Right cardiac atrium (tissue), 5 donors: ENCODE measurements at regions of chr5 and their contacts with region 1.

Region 1: DNA sequence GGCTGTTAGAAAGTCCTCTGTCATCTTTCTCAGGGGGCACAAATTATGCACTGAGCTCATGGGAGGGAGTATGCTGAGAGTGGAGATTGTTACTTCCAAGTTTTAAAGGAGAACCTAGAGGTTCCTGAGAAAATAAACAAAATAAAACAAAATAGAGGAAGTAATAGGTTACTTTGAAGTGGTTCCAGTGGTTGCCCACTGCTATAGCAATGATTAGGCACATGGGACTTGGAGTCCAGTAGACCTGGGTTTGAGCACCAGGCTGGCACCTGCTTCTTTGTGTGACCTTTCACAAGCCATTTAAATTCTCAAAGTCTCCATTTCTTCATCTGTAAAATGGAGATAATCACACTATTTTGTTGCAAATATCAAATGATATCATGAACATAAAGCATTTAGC is 13.8 kb upstream of the CDC23 start:
- DNase-seq: no peak
- ATAC-seq: no peak
- H3K4me3 ChIP-seq: no peak overlapping the region
- H3K27ac ChIP-seq: no peak overlapping the region
- H3K4me1 ChIP-seq: peaks cover 3% of the 10 kb centered on the region
- H3K27me3 ChIP-seq: no peaks in the 10 kb centered on the region

Region 2: GRCh38 chr5:138109463-138110265 is 117.2 kb before region 1 on chr5:
- intact Hi-C with region 1: no loop called
- DNase-seq: no peak
- ATAC-seq: no peak
- H3K4me3 ChIP-seq: no peak overlapping the region
- H3K27ac ChIP-seq: no peak overlapping the region
- H3K4me1 ChIP-seq: no peaks in the 10 kb centered on the region
- H3K27me3 ChIP-seq: no peaks in the 10 kb centered on the region

Region 3: GRCh38 chr5:138159666-138160065 is 67.2 kb before region 1 on chr5:
- intact Hi-C with region 1: no loop called
- DNase-seq: no peak
- ATAC-seq: no peak
- H3K4me3 ChIP-seq: no peak overlapping the region
- H3K27ac ChIP-seq: no peak overlapping the region
- H3K4me1 ChIP-seq: no peaks in the 10 kb centered on the region
- H3K27me3 ChIP-seq: no peaks in the 10 kb centered on the region

Region 4: GRCh38 chr5:138274189-138274853 is 47.4 kb after region 1 on chr5 and contains the start of gene GFRA3:
- intact Hi-C with region 1: loop called in 1 of 4 experiments (anchors 10 kb)
- DNase-seq: peak in 2 of 3 donors; percentile 49 to 50
- ATAC-seq: peak; percentile 33 to 63
- H3K4me3 ChIP-seq: peak within 1 kb of the TSS; percentile 55
- H3K27ac ChIP-seq: no peak within 1 kb of the TSS
- H3K4me1 ChIP-seq: peaks cover 2% of the 10 kb centered on the region
- H3K27me3 ChIP-seq: no peaks in the 10 kb centered on the region
- total RNA-seq, gene GFRA3: 1.0 to 1.9 (median 1.5) TPM

Region 5: DNA sequence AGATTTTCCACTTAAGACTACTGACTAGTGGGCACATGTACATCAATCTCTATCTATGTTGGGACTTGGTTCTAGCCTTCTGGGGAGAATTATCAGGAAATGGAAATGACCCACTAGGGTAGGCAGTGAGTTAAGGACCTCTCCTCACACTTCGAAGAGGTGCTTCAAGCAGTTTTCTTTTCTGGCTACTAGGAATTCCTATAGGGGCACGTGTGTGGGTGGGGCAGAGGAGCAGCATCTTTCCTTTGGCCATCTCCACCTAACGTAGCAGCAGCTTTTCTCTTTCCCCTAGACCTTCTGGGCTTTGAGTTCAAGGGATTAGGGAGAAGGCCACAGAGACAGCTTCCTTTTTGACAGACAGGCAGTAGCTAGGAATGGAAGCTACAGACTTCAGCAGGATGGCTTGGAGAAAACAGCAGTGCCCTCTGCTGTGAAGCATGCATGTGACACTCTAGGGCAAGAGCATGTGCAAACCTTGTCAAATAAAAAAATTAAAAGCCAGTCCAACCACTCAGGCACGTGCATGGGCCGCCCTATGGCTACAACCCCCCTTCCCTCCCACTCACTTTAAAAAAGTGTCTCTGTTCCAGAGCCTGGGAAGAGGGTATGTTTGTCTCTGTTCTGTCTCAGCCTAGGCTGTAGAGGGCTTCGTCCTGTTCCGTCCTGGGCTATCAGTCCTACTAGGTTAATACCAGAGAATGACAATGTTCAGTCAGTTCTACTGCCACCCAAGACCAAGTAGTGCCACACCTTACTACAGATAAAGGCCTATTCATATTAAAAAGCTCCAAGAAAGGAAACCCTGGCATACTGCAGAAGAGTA is 56.2 kb after region 1 on chr5:
- intact Hi-C with region 1: loop called (anchors 5 to 10 kb)
- DNase-seq: peak; percentile 38 to 59 (median 59)
- ATAC-seq: peak; percentile 86 to 88
- H3K4me3 ChIP-seq: no peak overlapping the region
- H3K27ac ChIP-seq: no peak overlapping the region
- H3K4me1 ChIP-seq: no peaks in the 10 kb centered on the region
- H3K27me3 ChIP-seq: no peaks in the 10 kb centered on the region

Region 6: DNA sequence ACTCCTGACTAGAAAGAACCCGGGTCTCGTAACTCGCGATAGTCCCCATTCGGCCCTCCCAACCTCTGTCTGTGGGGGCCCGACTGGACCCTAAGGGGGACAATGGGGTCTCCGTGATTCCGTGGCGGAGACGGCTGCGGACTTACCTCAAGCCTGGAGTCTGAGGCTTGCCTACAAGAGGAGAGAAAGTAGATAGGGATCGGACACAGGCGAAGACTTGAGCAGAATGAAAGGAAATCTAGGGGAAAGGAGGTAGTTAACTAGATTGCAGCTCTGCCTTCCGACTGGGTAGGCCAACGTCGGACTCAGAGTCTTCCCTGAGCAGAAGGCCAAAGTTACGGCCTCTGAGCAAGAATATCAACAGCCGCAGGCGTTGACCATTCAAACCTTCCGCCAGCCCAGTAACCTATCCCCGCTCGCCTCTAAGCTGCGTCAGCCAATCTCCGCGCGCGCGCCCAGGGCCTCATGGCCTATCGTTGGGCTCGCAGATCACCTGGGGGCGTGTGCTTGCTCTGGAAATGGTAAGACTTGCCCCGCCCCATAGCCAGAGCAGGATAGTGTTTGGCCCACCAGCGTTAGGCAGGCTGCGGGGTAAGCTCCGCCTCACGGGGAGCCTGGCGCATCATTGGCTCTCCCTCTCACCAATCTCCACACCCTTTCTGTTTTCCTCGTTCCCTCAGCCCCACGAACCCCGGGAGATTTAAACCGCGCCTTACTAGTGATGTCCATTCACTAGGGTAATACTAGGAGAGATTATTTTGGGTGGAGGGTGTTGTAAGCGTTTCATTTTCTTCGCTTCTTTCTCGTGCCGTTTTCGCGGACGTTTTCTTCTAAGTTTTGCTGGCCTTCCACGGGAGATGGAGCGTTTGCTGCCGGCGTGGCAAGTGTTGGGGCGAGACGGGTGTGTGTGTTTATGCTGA is 104.8 kb after region 1 on chr5 and contains the start of gene CDC25C:
- intact Hi-C with region 1: no loop called
- DNase-seq: peak; percentile 98 to 99 (median 99)
- ATAC-seq: peak; percentile 100
- H3K4me3 ChIP-seq: peak within 1 kb of the TSS; percentile 57
- H3K27ac ChIP-seq: no peak within 1 kb of the TSS
- H3K4me1 ChIP-seq: no peaks in the 10 kb centered on the region
- H3K27me3 ChIP-seq: no peaks in the 10 kb centered on the region
- total RNA-seq, gene CDC25C: 0.26 to 0.29 TPM in 2 of 4 donors, not detected in the others

Region 7: DNA sequence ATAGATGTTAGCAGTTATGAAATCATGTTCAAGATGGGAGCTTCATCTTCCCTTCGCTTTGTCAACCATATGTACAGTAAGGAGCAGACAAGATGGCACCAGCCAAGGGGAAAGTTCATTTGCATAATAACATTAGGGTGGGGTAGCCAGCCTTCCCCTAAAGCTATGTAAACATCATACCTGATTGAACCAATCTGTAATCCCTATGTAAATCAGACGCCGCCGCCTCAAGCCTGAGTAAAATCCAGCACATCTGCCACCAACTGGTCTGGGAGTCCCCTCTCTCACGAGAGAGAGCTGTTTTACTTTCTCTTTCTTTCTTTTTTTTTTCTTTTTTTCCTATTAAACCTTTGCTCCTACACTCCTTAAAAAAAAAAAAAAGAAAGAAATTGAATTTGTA is 181.1 kb after region 1 on chr5:
- intact Hi-C with region 1: loop called in 2 of 4 experiments (anchors 10 kb)
- DNase-seq: no peak
- ATAC-seq: no peak
- H3K4me3 ChIP-seq: no peak overlapping the region
- H3K27ac ChIP-seq: no peak overlapping the region
- H3K4me1 ChIP-seq: no peaks in the 10 kb centered on the region
- H3K27me3 ChIP-seq: no peaks in the 10 kb centered on the region

Region 8: GRCh38 chr5:138418444-138418843 is 191.5 kb after region 1 on chr5:
- intact Hi-C with region 1: loop called in 1 of 4 experiments (anchors 10 kb)
- DNase-seq: no peak
- ATAC-seq: no peak
- H3K4me3 ChIP-seq: no peak overlapping the region
- H3K27ac ChIP-seq: no peak overlapping the region
- H3K4me1 ChIP-seq: no peaks in the 10 kb centered on the region
- H3K27me3 ChIP-seq: no peaks in the 10 kb centered on the region